ENCODE measurements at regions of chrX and their contacts with region 1.

Region 1: DNA sequence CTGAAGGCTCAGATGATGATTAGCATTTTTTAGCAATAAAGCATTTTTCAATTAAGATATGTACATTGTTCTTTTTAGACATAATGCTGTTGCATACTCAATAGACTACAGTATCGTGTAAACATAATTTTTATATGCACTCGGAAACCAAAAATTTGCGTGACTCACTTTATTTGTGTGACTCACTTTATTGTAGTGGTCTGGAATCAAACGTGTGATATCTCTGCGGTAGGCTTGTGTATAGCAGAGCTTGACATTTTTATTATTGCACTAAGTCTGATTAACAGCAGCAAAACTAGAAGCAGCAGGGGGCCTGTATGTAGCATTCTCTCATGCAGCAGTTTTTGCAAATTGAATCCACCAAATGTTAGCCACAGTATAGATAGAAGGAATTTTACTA is 119.1 kb upstream of the PRDX4 start:
- DNase-seq: peak; percentile 89
- ATAC-seq: peak; percentile 81
- H3K4me3 ChIP-seq: no peak overlapping the region
- H3K27ac ChIP-seq: no peak overlapping the region
- H3K4me1 ChIP-seq: peaks cover 4% of the 10 kb centered on the region; the same call in 1 of the 2 replicates
- H3K27me3 ChIP-seq: peaks cover 38% of the 10 kb centered on the region; the same call in 1 of the 2 replicates
- CTCF ChIP-seq: no peak

Region 2: DNA sequence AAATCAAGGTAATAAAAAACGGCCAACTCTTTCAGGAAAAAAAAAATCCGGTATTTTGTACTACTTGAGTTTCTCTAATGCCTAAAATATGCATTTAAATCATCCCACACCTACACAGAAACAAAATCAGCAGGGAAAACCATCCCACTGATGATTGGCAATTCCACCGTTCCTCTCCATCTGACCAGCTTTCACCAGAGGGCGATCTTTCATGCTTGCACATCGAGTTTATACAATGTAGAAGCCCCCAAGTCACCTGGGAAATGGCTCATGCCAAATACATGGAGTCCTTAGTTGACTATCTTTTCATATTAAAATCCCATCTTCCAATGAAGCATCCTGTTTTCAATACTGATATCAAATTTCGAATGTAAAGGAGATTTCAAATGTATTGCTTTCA is 144.3 kb before region 1 on chrX:
- CTCF ChIA-PET with region 1: no interaction called
- POLR2A ChIA-PET with region 1: no interaction called
- intact Hi-C with region 1: no loop called
- DNase-seq: peak; percentile 30
- ATAC-seq: 0 out of 2 replicates have a peak, but pooled peaks have one; percentile 33
- H3K4me3 ChIP-seq: no peak overlapping the region
- H3K27ac ChIP-seq: no peak overlapping the region
- H3K4me1 ChIP-seq: no peaks in the 10 kb centered on the region
- H3K27me3 ChIP-seq: peaks cover 8% of the 10 kb centered on the region; the same call in 1 of the 2 replicates
- CTCF ChIP-seq: peak; percentile 64

Region 3: GRCh38 chrX:23503835-23504542 is 44.2 kb before region 1 on chrX:
- CTCF ChIA-PET with region 1: no interaction called
- POLR2A ChIA-PET with region 1: no interaction called
- intact Hi-C with region 1: loop called (anchors 2 kb)
- DNase-seq: peak; percentile 96
- ATAC-seq: peak; percentile 99
- H3K4me3 ChIP-seq: peak overlapping the region; percentile 53
- H3K27ac ChIP-seq: peak overlapping the region; percentile 59
- H3K4me1 ChIP-seq: peaks cover 30% of the 10 kb centered on the region
- H3K27me3 ChIP-seq: no peaks in the 10 kb centered on the region
- CTCF ChIP-seq: no peak

Measured in PC-3 (cell line).